H1 (cell line): ENCODE measurements at regions of chr7 and their contacts with region 1.

Region 1: GRCh38 chr7:148867596-148868377 is 16.3 kb downstream of the EZH2 start:
- DNase-seq: no peak
- H3K4me3 ChIP-seq: no peak overlapping the region
- H3K27ac ChIP-seq: no peak overlapping the region
- H3K4me1 ChIP-seq: peaks cover 0 to 8% (median 0%) of the 10 kb centered on the region in 4 experiments; a peak in 1 of 7 replicates
- H3K27me3 ChIP-seq: no peaks in the 10 kb centered on the region
- CTCF ChIP-seq: no peak
- EP300 ChIP-seq: no peak
- POLR2A ChIP-seq: no peak
- RAD21 ChIP-seq: no peak

Region 2: GRCh38 chr7:148856891-148857290 is 10.9 kb before region 1 on chr7:
- CTCF ChIA-PET with region 1: interaction called, 18 read pairs
- POLR2A ChIA-PET with region 1: no interaction called
- DNase-seq: no peak
- H3K4me3 ChIP-seq: no peak overlapping the region
- H3K27ac ChIP-seq: no peak overlapping the region
- H3K4me1 ChIP-seq: peaks cover 0 to 9% (median 4%) of the 10 kb centered on the region in 4 experiments; a peak in 3 of 7 replicates
- H3K27me3 ChIP-seq: no peaks in the 10 kb centered on the region
- CTCF ChIP-seq: no peak
- EP300 ChIP-seq: no peak
- POLR2A ChIP-seq: no peak
- RAD21 ChIP-seq: no peak